ENCODE measurements at regions of chr1 and their contacts with region 1.

Region 1: GRCh38 chr1:3314491-3315381 is 139.7 kb upstream of the ARHGEF16 start:
- DNase-seq: no peak
- H3K4me3 ChIP-seq: no peak overlapping the region
- H3K27ac ChIP-seq: peak overlapping the region; percentile 99
- H3K27me3 ChIP-seq: no peaks in the 10 kb centered on the region
- CTCF ChIP-seq: no peak

Region 2: GRCh38 chr1:3530926-3531818 is 216.4 kb after region 1 on chr1:
- CTCF ChIA-PET with region 1: no interaction called
- POLR2A ChIA-PET with region 1: no interaction called
- DNase-seq: no peak
- H3K4me3 ChIP-seq: peak overlapping the region; percentile 51
- H3K27ac ChIP-seq: no peak overlapping the region
- H3K27me3 ChIP-seq: no peaks in the 10 kb centered on the region
- CTCF ChIP-seq: no peak

Region 3: GRCh38 chr1:3577300-3577699 is 262.6 kb after region 1 on chr1:
- CTCF ChIA-PET with region 1: interaction called, 14 read pairs
- POLR2A ChIA-PET with region 1: no interaction called
- DNase-seq: peak; percentile 34
- H3K4me3 ChIP-seq: no peak overlapping the region
- H3K27ac ChIP-seq: no peak overlapping the region
- H3K27me3 ChIP-seq: peaks cover 7% of the 10 kb centered on the region
- CTCF ChIP-seq: no peak